ENCODE measurements at regions of chr1 and their contacts with region 1.

Region 1: DNA sequence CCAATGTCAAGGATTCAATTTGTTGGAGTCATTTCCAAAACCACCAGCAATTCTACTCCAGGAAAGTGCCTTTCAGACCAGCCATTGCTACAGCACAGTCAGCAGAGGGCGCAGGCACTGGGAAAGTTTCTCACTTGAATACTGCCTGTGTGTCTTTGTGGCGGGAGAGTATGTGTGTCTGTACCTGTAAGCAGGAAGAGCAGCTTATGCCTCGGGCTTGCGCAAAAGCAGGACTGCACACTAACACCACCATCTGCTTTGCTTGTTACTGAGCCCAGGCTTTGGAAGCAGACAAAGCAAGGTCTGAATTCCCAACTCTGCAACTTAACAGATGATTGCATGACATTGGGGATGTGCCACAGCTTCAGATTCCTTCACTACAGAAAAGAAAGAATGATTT is 7.0 kb upstream of the CTSE start:
- DNase-seq: peak; percentile 78
- ATAC-seq: peak; percentile 96
- H3K4me3 Mint-ChIP-seq: no peak overlapping the region
- H3K27ac Mint-ChIP-seq: no peak overlapping the region
- H3K4me1 Mint-ChIP-seq: peaks cover 9% of the 10 kb centered on the region
- H3K27me3 Mint-ChIP-seq: peaks cover 24% of the 10 kb centered on the region
- CTCF ChIP-seq: peak; percentile 89

Region 2: DNA sequence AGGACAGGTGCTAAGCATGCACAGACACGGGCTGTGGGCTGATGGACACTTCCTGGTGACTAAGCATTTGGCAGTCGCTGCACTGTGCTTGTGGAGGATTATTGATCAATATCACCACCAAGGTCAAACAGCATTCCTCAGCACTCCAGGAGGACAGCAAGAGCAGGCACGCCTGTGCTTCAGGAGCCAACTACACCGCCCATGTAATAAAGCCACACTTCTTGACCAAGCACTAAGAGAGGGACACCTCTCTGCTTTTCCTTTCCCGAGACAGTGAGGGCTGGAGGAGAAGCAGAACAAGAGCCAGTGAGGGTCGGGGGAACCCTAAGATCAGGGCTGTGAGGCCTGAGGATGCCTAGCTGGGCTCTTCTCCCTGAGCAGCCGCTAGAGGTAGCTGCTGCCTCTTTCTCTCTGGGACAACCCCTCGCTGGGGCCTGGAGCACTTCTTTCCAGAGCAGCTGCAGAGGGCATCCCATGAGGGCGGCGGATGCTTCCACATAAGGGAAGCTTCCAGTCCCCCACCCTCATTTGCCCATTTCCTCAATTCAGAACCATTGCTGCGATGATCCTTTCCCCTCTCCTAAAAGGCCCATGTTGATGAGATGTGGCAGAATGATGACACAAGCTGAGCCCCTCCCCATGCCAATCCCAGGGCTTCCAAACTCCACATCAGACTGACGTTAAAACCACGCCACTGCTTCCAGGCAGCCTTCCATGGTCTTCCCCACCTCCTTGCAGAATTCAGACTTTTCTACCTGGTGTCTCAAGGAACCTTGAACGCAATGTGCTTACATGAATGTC is 46.6 kb before region 1 on chr1:
- CTCF ChIA-PET with region 1: interaction called, 12 read pairs
- POLR2A ChIA-PET with region 1: interaction called, 3 read pairs
- intact Hi-C with region 1: no loop called
- DNase-seq: peak; percentile 59
- ATAC-seq: peak; percentile 77
- H3K4me3 Mint-ChIP-seq: no peak overlapping the region
- H3K27ac Mint-ChIP-seq: no peak overlapping the region
- H3K4me1 Mint-ChIP-seq: no peaks in the 10 kb centered on the region
- H3K27me3 Mint-ChIP-seq: no peaks in the 10 kb centered on the region
- CTCF ChIP-seq: peak; percentile 46

Region 3: DNA sequence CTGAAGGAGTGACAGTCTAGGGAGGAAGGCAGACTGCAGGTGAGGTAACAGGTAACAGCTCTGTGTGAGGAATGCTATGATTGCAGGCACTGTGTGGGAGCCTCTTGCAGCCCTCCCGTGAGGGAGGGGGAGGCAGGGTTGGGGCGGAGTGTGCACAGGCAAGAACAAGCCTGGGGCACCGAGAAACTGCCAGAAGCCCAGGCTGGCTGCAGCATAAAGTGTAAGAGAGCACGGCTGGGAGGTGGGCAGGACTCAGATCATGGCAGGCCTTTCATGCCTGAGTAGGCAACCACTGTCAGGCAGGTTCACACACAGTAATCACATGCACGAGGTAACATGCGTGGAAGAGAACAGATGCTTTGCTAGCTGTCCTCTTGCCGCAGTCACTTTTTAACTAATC is 10.9 kb after region 1 on chr1:
- CTCF ChIA-PET with region 1: interaction called, 17 read pairs
- POLR2A ChIA-PET with region 1: no interaction called
- intact Hi-C with region 1: no loop called
- DNase-seq: no peak
- ATAC-seq: no peak
- H3K4me3 Mint-ChIP-seq: no peak overlapping the region
- H3K27ac Mint-ChIP-seq: no peak overlapping the region
- H3K4me1 Mint-ChIP-seq: peaks cover 10% of the 10 kb centered on the region
- H3K27me3 Mint-ChIP-seq: peaks cover 10% of the 10 kb centered on the region
- CTCF ChIP-seq: no peak

Region 4: DNA sequence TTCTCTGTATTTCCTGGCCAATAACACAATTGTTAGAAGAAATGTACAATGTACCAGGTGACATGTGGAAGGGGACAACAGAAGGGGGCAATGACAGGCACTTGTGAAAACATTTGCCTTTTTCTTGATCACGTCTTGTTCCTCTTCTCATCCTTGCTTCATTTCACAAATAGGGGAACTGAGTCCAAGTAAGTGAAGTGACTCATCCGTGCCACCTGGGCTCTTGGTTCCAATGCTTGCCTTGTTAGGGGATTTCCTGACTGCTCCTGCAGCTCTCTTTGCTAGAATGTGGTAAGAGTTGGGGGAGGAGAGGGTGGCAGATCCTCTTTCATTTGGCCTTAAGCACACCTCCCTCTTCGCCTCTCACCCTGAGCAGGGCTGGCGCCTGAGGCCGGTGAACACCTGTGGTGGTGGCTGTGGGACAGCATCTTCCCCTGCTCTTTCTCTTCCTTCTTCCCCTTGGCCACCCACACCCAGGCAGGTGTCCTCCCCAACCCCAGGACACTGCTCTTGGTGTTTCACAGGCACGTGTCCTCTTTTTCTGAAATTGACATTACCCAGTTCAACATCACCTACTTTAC is 20.0 kb after region 1 on chr1:
- CTCF ChIA-PET with region 1: interaction called, 22 read pairs
- POLR2A ChIA-PET with region 1: no interaction called
- intact Hi-C with region 1: no loop called
- DNase-seq: peak; percentile 81
- ATAC-seq: peak; percentile 91
- H3K4me3 Mint-ChIP-seq: peak overlapping the region; percentile 11
- H3K27ac Mint-ChIP-seq: peak overlapping the region; percentile 86
- H3K4me1 Mint-ChIP-seq: peaks cover 37% of the 10 kb centered on the region
- H3K27me3 Mint-ChIP-seq: peaks cover 4% of the 10 kb centered on the region
- CTCF ChIP-seq: no peak

Region 5: GRCh38 chr1:206094024-206094423 is 63.3 kb after region 1 on chr1:
- CTCF ChIA-PET with region 1: interaction called, 22 read pairs
- POLR2A ChIA-PET with region 1: no interaction called
- intact Hi-C with region 1: no loop called
- DNase-seq: no peak
- ATAC-seq: no peak
- H3K4me3 Mint-ChIP-seq: no peak overlapping the region
- H3K27ac Mint-ChIP-seq: no peak overlapping the region
- H3K4me1 Mint-ChIP-seq: no peaks in the 10 kb centered on the region
- H3K27me3 Mint-ChIP-seq: peaks cover 15% of the 10 kb centered on the region
- CTCF ChIP-seq: no peak